ENCODE measurements at regions of chr1 and their contacts with region 1.

Region 1: DNA sequence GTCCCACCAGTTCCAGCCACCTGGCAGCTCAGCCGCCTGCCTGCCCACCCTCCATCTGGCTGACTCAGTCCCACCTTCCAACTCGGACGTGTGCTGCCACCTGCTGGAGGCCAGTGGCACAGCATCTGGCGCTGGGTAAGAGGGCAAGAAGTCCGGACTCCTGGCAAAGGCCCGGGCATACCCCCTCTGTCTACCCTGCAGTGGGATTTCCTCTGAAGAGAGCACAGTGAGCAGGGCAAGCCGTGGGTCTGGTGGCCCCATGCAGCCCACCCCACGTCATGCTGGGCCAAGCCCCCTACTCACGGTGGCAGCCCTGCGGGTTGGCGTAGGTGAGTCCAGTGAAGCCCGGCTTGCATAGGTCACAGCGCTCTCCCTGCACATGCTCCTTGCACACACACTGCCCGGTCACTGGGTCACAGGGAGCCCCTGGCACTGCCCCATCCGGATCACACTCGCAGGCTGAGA is 24.5 kb downstream of the LAMB3 start:
- DNase-seq: peak; percentile 77 to 86
- ATAC-seq: peak; percentile 70 to 82 (median 78)
- H3K4me3 ChIP-seq: peak overlapping the region in 3 of 10 donors; percentile 11 to 32 (median 14)
- H3K27ac ChIP-seq: peak overlapping the region in 5 of 10 donors; percentile 7 to 76 (median 61)
- H3K4me1 ChIP-seq: peaks cover 20 to 60% (median 45%) of the 10 kb centered on the region in 9 donors
- H3K27me3 ChIP-seq: no peaks in the 10 kb centered on the region
- CTCF ChIP-seq: peak; percentile 93 to 99 (median 97)

Region 2: GRCh38 chr1:209576798-209577197 is 51.0 kb before region 1 on chr1:
- intact Hi-C with region 1: loop called in 7 of 10 experiments (anchors 2 to 5 kb)
- DNase-seq: peak; percentile 81 to 84
- ATAC-seq: peak; percentile 90 to 97 (median 94)
- H3K4me3 ChIP-seq: no peak overlapping the region
- H3K27ac ChIP-seq: no peak overlapping the region
- H3K4me1 ChIP-seq: peaks cover 0 to 5% (median 0%) of the 10 kb centered on the region in 9 donors
- H3K27me3 ChIP-seq: peaks cover 0 to 39% (median 18%) of the 10 kb centered on the region in 7 donors
- CTCF ChIP-seq: peak; percentile 81 to 98 (median 96)

Region 3: DNA sequence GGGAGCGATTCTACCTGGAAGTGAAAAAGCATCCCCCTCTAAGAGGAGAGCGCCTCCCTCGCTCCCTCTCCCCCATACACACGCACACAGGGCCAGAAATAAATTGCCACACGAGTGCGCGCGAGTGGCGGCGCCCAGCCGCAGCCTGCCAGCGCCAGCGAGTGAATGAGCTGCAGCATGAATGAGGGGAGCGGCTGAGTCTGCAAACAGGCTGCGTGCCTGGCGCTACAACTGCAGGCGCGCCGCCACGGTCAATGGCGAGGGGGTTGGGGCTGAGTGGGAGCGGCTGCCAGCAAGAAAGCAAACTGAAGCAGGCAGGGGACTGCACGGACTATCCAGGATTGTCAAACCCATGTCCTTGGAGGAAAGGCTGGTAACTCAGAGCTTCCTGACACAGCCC is 42.1 kb before region 1 on chr1:
- intact Hi-C with region 1: loop called in 5 of 10 experiments (anchors 5 kb)
- DNase-seq: peak; percentile 46 to 70
- ATAC-seq: peak; percentile 54 to 95 (median 87)
- H3K4me3 ChIP-seq: peak overlapping the region in 3 of 10 donors; percentile 6 to 29 (median 12)
- H3K27ac ChIP-seq: no peak overlapping the region
- H3K4me1 ChIP-seq: peaks cover 0 to 20% (median 10%) of the 10 kb centered on the region in 9 donors
- H3K27me3 ChIP-seq: peaks cover 0 to 56% (median 32%) of the 10 kb centered on the region in 7 donors
- CTCF ChIP-seq: peak in 3 of 9 donors; percentile 31 to 41 (median 32)

Region 4: DNA sequence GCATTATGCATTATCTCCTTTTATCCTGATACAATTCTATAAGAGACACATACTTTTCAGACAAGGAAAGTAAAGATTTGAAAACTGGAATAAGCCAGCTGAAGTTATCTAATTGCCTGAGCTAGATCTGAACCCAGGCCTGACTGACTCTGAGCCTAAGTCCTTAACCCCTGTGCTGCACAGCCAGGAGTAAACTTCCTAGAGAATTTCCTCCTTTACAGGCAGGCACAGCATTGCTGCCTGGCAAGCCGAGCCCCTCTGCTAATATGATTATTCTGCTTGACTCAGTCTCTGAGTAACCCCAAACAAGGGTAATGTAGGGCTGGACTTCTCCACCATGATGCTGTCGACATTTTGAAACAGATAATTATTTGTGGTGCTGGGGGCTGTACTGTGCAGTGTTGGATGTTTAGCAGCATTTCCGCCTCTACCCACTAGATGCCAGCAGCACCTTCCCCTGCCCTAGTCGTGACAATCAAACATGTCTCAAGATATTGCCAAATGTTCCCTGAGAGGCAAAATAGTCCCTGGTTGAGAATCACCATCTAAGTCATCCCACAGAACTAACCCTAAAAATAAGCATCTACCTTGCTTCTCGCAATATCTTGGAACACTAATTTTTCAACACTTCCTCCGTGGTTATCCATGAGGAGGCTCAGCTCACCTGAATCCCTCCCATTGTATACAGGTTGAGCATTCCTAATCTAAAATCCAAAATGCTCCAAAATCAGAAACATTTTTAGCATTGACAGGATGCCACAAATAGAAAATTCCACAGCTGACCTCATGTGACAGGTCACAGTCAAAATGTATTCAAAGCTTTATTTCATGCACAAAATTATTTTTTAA is 25.7 kb before region 1 on chr1:
- intact Hi-C with region 1: loop called in 4 of 10 experiments (anchors 2 kb)
- DNase-seq: peak in 1 of 2 donors; percentile 20
- ATAC-seq: peak in 7 of 8 donors; percentile 59 to 93 (median 76)
- H3K4me3 ChIP-seq: no peak overlapping the region
- H3K27ac ChIP-seq: no peak overlapping the region
- H3K4me1 ChIP-seq: peaks cover 0 to 8% (median 0%) of the 10 kb centered on the region in 9 donors
- H3K27me3 ChIP-seq: peaks cover 0 to 15% (median 0%) of the 10 kb centered on the region in 7 donors
- CTCF ChIP-seq: peak; percentile 18 to 79 (median 70)

Region 5: GRCh38 chr1:209733409-209734192 is 105.8 kb after region 1 on chr1:
- intact Hi-C with region 1: no loop called
- DNase-seq: no peak
- ATAC-seq: peak in 4 of 8 donors; percentile 22 to 85 (median 48)
- H3K4me3 ChIP-seq: no peak overlapping the region
- H3K27ac ChIP-seq: peak overlapping the region in 3 of 10 donors; percentile 10 to 37 (median 18)
- H3K4me1 ChIP-seq: peaks cover 0 to 37% (median 24%) of the 10 kb centered on the region in 9 donors
- H3K27me3 ChIP-seq: no peaks in the 10 kb centered on the region
- CTCF ChIP-seq: no peak

Region 6: DNA sequence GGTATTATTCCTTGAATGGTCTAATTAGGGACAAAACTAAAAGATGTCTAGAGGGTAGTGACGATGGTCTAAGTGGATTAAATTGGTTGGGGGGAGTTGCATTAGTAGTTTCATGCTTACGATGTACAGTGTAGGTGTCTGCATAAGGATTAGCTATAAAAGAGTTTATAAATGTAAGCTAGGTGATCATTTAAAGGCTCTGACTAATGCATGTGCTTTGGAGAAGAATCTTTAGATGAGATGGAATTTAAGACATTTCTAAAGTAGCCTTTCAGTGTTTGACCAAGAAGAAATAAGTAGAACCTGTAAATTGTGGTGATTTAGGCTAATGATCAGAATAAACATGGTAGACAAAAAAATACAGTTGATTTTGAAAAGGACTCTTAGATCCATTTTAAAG is 317.6 kb after region 1 on chr1:
- intact Hi-C with region 1: no loop called
- DNase-seq: no peak
- ATAC-seq: no peak
- H3K4me3 ChIP-seq: no peak overlapping the region
- H3K27ac ChIP-seq: no peak overlapping the region
- H3K4me1 ChIP-seq: no peaks in the 10 kb centered on the region
- H3K27me3 ChIP-seq: peaks cover 0 to 22% (median 15%) of the 10 kb centered on the region in 7 donors
- CTCF ChIP-seq: no peak

Measured in heart right ventricle (tissue), 16 donors.